ENCODE measurements at regions of chr7 and their contacts with region 1.

Region 1: DNA sequence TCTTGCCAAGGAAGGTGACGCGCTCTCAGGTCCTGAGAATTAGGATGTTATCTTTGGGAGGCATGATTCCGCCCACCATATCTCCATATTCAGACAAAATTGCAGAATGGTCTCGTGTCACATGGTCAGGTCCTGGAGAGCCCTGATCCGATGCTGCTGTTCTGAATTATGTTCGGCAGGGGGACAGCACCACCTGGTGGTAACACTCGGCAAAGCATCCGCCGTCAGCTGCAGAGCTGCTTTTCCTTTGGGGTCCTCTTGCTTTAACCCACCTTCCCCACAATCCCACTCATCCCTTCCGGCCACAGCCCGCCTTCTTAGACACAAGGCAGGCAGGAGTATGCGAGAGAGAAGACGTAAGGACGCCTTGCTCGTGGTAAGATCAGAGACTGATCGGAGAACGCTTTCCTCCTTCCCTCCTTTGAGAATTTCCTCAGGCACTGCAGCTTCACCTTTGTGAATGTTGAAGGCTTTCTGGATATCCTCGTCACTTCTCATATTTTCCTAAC is 327.8 kb upstream of the C7orf33 start:
- DNase-seq: peak; percentile 79
- ATAC-seq: peak; percentile 90
- H3K4me3 ChIP-seq: peak overlapping the region in 2 of 5 experiments; percentile 28 to 47
- H3K4me3 Mint-ChIP-seq: peak overlapping the region; percentile 68
- H3K27ac ChIP-seq: no peak overlapping the region
- H3K27ac Mint-ChIP-seq: no peak overlapping the region
- H3K4me1 ChIP-seq: peaks cover 16 to 27% of the 10 kb centered on the region in 2 donors
- H3K4me1 Mint-ChIP-seq: peaks cover 29% of the 10 kb centered on the region
- H3K27me3 ChIP-seq: peaks cover 0 to 5% (median 0%) of the 10 kb centered on the region in 4 experiments
- H3K27me3 Mint-ChIP-seq: peaks cover 12% of the 10 kb centered on the region
- CTCF ChIP-seq: peak; percentile 97

Region 2: DNA sequence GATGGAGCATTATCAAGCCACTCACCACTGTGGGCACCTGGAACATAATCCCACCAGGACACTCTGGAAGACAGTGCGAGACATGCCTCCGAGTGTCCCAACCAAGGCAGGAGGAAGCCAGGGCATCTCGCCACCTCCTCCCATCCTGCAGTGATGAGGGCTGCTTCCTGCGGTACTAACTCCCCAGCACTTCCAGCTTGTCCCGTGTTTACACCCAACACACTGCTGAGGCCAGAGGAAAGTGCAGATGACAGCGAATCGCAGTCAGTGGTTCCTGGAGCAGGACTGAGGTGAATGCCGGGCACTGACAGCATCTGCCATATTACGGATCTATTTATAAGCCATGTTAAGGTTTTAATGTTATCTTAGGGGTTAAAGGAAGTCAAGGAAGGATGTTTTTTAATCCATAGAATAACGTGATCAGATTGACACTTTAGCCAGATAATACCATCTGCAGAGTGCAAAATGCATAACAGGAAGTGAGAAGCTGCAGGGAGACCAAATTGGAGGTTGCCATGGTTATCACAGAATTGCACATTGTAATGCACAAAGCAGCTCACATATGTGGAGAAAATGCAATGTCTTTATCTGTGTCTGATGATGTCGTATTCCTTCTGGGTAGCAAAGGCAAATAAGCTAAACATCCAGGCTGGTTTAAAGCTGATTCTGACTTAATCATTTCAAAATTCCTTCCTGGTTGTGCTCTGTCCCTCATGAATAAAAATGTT is 13.7 kb after region 1 on chr7:
- CTCF ChIA-PET with region 1: interaction called, 34 read pairs
- POLR2A ChIA-PET with region 1: no interaction called
- intact Hi-C with region 1: no loop called
- DNase-seq: peak; percentile 30
- ATAC-seq: peak; percentile 63
- H3K4me3 ChIP-seq: no peak overlapping the region
- H3K4me3 Mint-ChIP-seq: peak overlapping the region; percentile 60
- H3K27ac ChIP-seq: no peak overlapping the region
- H3K27ac Mint-ChIP-seq: peak overlapping the region; percentile 69
- H3K4me1 ChIP-seq: peaks cover 19 to 24% of the 10 kb centered on the region in 2 donors
- H3K4me1 Mint-ChIP-seq: peaks cover 31% of the 10 kb centered on the region
- H3K27me3 ChIP-seq: no peaks in the 10 kb centered on the region
- H3K27me3 Mint-ChIP-seq: no peaks in the 10 kb centered on the region
- CTCF ChIP-seq: no peak

Region 3: DNA sequence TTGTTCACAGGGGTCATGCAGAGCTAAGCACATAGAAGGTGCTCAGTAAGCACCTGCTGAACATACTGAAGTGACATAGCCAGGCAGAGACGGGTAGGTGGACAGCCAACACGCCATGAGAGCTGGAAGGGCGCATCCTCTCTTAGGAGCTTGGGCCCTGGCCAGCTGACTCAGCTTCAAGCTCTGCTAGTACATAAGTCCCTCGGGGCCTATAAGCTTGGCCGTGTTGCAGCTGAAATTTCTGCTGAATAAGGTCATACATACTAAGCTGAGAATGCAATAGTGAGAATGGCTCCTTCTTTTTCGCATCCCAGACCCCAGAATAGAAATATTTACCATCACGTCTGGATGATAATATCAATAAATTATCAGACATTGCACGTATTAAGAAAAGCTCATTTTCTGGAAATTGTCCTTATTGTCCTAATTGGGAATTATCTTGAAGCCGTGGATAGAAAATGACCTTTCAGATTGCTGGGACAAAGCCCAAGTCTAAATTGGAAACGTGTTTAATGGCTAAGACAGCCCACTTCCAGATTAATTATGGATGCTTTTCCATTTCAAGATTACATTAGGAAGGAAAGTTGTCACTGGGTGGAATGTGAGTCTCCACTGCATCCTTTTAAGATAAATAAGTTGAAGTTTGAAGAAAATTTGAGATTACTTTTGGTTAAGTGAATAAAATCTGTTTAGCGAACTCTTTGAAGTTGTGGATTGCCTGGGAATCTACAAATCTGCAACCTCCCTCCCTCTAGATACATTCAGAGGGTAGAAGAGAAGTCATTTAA is 40.7 kb after region 1 on chr7:
- CTCF ChIA-PET with region 1: interaction called, 44 read pairs
- POLR2A ChIA-PET with region 1: interaction called, 8 read pairs
- intact Hi-C with region 1: no loop called
- DNase-seq: peak; percentile 35
- ATAC-seq: peak; percentile 29
- H3K4me3 ChIP-seq: peak overlapping the region in 4 of 5 experiments; percentile 6 to 60 (median 46)
- H3K4me3 Mint-ChIP-seq: peak overlapping the region; percentile 81
- H3K27ac ChIP-seq: peak overlapping the region; percentile 83 to 90
- H3K27ac Mint-ChIP-seq: peak overlapping the region; percentile 95
- H3K4me1 ChIP-seq: peaks cover 60 to 62% of the 10 kb centered on the region in 2 donors
- H3K4me1 Mint-ChIP-seq: peaks cover 65% of the 10 kb centered on the region
- H3K27me3 ChIP-seq: no peaks in the 10 kb centered on the region
- H3K27me3 Mint-ChIP-seq: no peaks in the 10 kb centered on the region
- CTCF ChIP-seq: no peak

Region 4: DNA sequence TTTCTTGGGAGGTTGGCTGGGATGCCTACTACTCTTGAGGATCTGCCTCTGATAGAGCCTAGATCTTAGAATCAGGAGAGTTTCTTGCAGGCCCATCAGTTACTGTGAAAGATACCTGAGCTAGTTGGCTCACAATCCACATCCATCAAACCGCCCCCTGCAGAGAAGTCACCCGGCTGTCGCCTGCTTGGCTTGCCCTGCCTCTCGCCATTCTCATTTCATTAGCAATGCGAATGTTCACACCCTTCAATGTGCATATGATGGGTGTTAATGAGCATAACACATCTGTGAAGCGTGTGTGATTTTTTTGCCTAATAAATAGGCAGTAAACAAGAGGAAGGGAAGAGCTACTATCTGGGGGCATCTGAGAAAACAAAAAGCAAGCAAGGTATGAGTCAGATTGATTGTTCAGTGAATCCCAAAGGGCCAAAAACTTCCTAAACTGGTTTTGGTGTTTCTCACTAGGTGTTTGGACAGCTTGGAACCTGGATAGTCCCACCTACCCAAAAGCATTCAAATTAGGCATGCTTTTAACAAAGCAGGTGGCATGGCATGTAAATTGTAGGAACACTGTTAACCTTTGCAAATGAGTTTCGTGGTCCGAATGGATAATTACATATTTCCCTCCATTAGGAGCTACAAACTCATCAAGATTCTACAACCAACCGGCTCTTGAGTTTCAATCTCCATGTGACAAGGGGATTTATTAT is 55.5 kb after region 1 on chr7:
- CTCF ChIA-PET with region 1: no interaction called
- POLR2A ChIA-PET with region 1: no interaction called
- intact Hi-C with region 1: no loop called
- DNase-seq: no peak
- ATAC-seq: no peak
- H3K4me3 ChIP-seq: no peak overlapping the region
- H3K4me3 Mint-ChIP-seq: no peak overlapping the region
- H3K27ac ChIP-seq: no peak overlapping the region
- H3K27ac Mint-ChIP-seq: no peak overlapping the region
- H3K4me1 ChIP-seq: no peaks in the 10 kb centered on the region
- H3K4me1 Mint-ChIP-seq: peaks cover 21% of the 10 kb centered on the region
- H3K27me3 ChIP-seq: no peaks in the 10 kb centered on the region
- H3K27me3 Mint-ChIP-seq: no peaks in the 10 kb centered on the region
- CTCF ChIP-seq: no peak

Region 5: DNA sequence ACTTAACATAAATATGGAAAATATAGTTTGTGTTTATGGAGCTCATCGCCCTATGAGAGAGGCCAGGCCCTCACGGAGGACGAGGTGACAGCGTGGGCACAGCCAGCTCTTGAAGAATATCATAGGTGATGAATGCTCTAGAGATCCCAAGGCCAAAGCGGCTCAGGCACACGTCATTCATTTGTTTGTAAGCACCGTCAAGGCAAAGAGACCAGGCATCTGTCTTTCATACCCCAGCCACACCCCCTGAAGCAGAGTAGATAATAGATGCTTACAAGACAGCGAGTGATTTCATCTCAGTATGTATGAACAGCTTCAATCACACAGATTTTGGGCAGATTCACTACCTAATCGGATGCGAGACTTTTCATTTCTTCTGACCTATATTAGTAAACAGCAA is 85.7 kb after region 1 on chr7:
- CTCF ChIA-PET with region 1: no interaction called
- POLR2A ChIA-PET with region 1: no interaction called
- intact Hi-C with region 1: no loop called
- DNase-seq: no peak
- ATAC-seq: no peak
- H3K4me3 ChIP-seq: no peak overlapping the region
- H3K4me3 Mint-ChIP-seq: no peak overlapping the region
- H3K27ac ChIP-seq: no peak overlapping the region
- H3K27ac Mint-ChIP-seq: no peak overlapping the region
- H3K4me1 ChIP-seq: no peaks in the 10 kb centered on the region
- H3K4me1 Mint-ChIP-seq: peaks cover 12% of the 10 kb centered on the region
- H3K27me3 ChIP-seq: no peaks in the 10 kb centered on the region
- H3K27me3 Mint-ChIP-seq: peaks cover 2% of the 10 kb centered on the region
- CTCF ChIP-seq: no peak

Region 6: GRCh38 chr7:148480479-148481146 is 217.8 kb after region 1 on chr7:
- CTCF ChIA-PET with region 1: interaction called, 105 read pairs
- POLR2A ChIA-PET with region 1: no interaction called
- intact Hi-C with region 1: loop called (anchors 1 kb)
- DNase-seq: peak; percentile 52
- ATAC-seq: no peak
- H3K4me3 ChIP-seq: no peak overlapping the region
- H3K4me3 Mint-ChIP-seq: no peak overlapping the region
- H3K27ac ChIP-seq: no peak overlapping the region
- H3K27ac Mint-ChIP-seq: no peak overlapping the region
- H3K4me1 ChIP-seq: peaks cover 0 to 11% of the 10 kb centered on the region in 2 donors
- H3K4me1 Mint-ChIP-seq: peaks cover 21% of the 10 kb centered on the region
- H3K27me3 ChIP-seq: no peaks in the 10 kb centered on the region
- H3K27me3 Mint-ChIP-seq: no peaks in the 10 kb centered on the region
- CTCF ChIP-seq: no peak

Region 7: DNA sequence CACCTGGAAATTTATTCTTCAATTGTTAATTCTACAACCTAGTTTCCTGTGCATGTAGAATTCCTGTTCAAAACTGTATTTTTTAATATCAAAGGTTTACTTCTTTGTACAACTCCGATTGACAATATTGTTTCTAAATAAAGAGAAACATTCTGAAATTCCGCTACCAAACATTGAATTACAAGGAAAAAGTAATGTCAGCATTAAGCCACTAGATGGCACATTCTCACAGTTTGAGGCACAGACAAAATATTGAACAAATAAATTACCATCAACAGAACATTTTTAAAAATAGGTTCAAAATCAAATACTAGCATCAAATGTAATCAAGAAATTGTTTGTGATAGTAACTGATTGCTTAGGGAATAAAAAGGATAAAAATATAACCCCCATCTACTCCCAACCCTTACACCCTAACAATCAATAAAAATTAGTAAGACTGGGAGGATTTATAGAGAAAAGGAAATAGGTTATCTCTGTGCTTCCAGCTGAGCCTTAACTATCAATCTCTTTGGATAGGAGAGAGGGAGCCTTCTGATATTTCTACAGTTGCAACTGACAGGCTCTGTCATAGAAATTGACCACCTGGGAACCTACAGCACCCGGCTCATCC is 241.2 kb after region 1 on chr7:
- CTCF ChIA-PET with region 1: interaction called, 11 read pairs
- POLR2A ChIA-PET with region 1: no interaction called
- intact Hi-C with region 1: no loop called
- DNase-seq: peak; percentile 61
- ATAC-seq: no peak
- H3K4me3 ChIP-seq: no peak overlapping the region
- H3K4me3 Mint-ChIP-seq: no peak overlapping the region
- H3K27ac ChIP-seq: no peak overlapping the region
- H3K27ac Mint-ChIP-seq: no peak overlapping the region
- H3K4me1 ChIP-seq: peaks cover 11 to 23% of the 10 kb centered on the region in 2 donors
- H3K4me1 Mint-ChIP-seq: peaks cover 47% of the 10 kb centered on the region
- H3K27me3 ChIP-seq: no peaks in the 10 kb centered on the region
- H3K27me3 Mint-ChIP-seq: no peaks in the 10 kb centered on the region
- CTCF ChIP-seq: peak; percentile 97

Region 8: DNA sequence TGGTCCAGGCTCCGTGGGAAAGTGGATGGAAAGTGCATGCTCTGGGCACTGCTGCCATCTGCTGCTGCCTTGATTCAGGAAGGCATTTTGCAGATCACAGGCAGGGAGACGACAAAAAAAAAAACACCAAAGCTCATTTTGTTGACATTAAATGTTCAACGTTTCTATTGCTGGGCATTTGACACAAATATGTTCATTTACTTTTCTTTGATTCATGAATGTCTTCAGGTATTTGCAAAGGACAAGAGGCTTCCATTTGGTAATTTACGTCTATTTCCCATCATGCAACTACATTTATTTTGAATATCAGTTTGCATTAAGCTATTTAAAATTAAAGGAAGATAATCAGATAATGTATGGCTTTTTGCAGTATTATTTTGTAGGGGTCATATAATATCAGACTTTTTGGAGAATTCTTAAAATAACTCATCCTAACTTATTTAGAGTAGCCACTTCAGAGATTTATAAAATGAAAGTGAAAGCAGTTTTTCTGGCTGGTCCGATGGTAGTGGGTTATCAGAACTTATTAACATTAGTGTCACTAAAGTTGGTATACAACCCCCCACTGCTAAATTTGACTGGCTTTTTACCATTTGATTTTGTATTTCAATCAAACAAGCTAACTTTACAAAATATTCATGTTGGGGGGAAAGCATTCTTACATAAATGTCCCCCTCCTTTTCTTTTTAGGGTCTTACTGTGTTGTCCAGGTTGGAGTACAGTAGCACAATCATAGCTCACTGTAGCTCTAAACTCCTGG is 700.2 kb after region 1 on chr7:
- CTCF ChIA-PET with region 1: interaction called, 5 read pairs
- POLR2A ChIA-PET with region 1: no interaction called
- intact Hi-C with region 1: loop called (anchors 2 kb)
- DNase-seq: peak; percentile 87
- ATAC-seq: peak; percentile 60
- H3K4me3 ChIP-seq: peak overlapping the region; percentile 66 to 100 (median 75)
- H3K4me3 Mint-ChIP-seq: peak overlapping the region; percentile 98
- H3K27ac ChIP-seq: peak overlapping the region; percentile 56 to 89
- H3K27ac Mint-ChIP-seq: peak overlapping the region; percentile 90
- H3K4me1 ChIP-seq: peaks cover 9 to 27% of the 10 kb centered on the region in 2 donors
- H3K4me1 Mint-ChIP-seq: peaks cover 28% of the 10 kb centered on the region
- H3K27me3 ChIP-seq: no peaks in the 10 kb centered on the region
- H3K27me3 Mint-ChIP-seq: no peaks in the 10 kb centered on the region
- CTCF ChIP-seq: peak; percentile 78